Gastrocnemius medialis (tissue), 4 donors: ENCODE measurements at regions of chr12 and their contacts with region 1.

Region 1: GRCh38 chr12:94262228-94263010 is 114.0 kb downstream of the PLXNC1 start:
- DNase-seq: peak; percentile 58 to 80
- ATAC-seq: peak; percentile 78
- H3K4me3 ChIP-seq: peak overlapping the region; percentile 59 to 65 (median 62)
- H3K27ac ChIP-seq: peak overlapping the region; percentile 79 to 88 (median 80)
- H3K4me1 ChIP-seq: peaks cover 25 to 50% of the 10 kb centered on the region in 2 donors
- H3K27me3 ChIP-seq: no peaks in the 10 kb centered on the region
- CTCF ChIP-seq: no peak
- POLR2A ChIP-seq: peak; percentile 14 to 29

Region 2: DNA sequence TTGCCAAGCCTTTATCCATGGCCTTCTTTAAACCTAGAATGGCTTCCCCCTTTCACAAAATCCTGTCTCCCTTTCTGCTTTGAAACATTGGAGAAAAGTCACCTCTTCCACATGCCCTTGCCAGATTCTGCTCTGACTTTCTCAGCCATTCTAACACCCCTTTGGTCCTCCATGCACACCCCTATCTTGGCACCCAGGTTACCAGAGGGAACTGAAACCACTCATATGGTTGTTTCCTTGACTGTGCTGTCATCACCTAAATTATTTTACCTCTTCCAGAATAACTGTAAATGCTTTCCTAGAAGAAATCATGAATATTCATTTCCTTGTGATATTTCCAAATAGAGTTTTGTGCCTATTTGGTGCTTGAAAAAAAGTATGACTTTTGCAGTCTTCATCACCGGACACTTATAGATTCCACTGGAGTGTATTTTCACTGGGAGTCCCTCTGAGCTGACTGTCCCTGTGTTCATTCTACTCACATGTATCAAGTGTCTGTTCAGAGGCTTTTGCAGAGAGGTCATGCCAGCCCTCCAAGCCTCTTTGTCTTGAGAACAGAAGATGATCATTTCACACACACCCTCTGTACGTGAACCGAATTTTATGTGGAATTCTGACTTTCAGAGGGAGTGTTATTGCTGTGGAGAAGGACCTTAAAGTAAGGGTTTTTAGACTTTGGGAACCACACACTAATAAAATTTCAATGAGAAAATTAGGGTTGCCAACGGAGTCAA is 39.9 kb before region 1 on chr12:
- in situ Hi-C with region 1: no loop called
- intact Hi-C with region 1: no loop called
- DNase-seq: no peak
- ATAC-seq: no peak
- H3K4me3 ChIP-seq: no peak overlapping the region
- H3K27ac ChIP-seq: no peak overlapping the region
- H3K4me1 ChIP-seq: no peaks in the 10 kb centered on the region
- H3K27me3 ChIP-seq: no peaks in the 10 kb centered on the region
- CTCF ChIP-seq: no peak
- POLR2A ChIP-seq: no peak

Region 3: DNA sequence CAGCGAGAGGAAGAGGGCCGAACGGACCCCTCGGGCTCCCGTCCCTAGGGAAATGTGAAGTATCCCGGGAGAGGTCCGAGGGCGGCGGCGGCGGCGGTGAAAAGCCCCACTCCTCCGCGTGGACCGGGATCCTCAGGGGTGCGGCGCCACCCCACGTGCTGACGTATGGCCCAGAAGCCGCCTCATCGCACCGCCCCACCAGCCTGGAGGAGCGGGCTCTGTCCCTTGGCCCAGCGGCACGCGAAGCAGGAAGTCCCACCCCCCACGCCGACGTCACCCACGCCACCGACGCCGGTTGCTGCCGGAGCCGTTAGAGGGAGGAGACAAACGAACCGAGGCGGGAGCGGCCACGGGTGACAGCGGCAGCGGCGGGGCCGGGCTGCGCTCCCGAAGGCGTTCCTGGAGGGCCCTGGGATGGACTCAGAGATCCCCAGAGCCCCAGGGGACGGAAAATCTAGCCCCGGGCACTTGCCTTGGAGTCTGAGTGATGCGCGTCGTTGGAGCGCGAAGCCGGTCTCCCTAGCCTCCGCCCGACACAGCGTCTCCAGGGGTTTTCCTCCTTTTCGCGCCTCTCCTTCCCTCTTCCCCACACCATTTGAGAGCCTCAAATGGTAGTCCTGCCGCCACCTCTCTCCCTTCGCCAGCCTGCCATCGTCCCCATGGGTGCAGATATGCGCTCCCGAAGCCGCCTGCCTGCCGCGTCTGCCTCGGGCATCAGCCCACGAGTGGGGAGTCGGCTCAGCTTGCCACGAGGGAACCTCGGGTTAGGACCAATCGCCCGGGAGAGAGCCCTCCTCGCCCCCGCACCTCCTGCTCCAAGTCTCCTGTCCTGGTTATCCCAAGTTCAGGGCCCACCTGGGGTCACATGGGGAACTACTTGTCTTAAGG is 197.6 kb after region 1 on chr12 and contains the start of gene CEP83:
- in situ Hi-C with region 1: no loop called
- intact Hi-C with region 1: loop called (anchors 5 kb)
- DNase-seq: peak; percentile 93 to 95
- ATAC-seq: peak; percentile 93 to 94
- H3K4me3 ChIP-seq: peak within 1 kb of the TSS; percentile 80 to 94 (median 86)
- H3K27ac ChIP-seq: peak within 1 kb of the TSS; percentile 91 to 94 (median 93)
- H3K4me1 ChIP-seq: peaks cover 10 to 12% of the 10 kb centered on the region in 2 donors
- H3K27me3 ChIP-seq: no peaks in the 10 kb centered on the region
- CTCF ChIP-seq: no peak
- POLR2A ChIP-seq: peak; percentile 76 to 89
- total RNA-seq, gene CEP83: 3.5 to 19.5 (median 11.2) TPM